ENCODE measurements at regions of chr13 and their contacts with region 1.

Region 1: GRCh38 chr13:111460548-111461444 is 140.4 kb downstream of the TEX29 start:
- DNase-seq: peak in 1 of 2 donors; percentile 26
- ATAC-seq: peak; percentile 53 to 89 (median 74)
- H3K4me3 ChIP-seq: no peak overlapping the region
- H3K27ac ChIP-seq: no peak overlapping the region
- H3K4me1 ChIP-seq: no peaks in the 10 kb centered on the region
- H3K27me3 ChIP-seq: peaks cover 0 to 6% (median 0%) of the 10 kb centered on the region in 3 donors
- CTCF ChIP-seq: peak; percentile 38

Region 2: DNA sequence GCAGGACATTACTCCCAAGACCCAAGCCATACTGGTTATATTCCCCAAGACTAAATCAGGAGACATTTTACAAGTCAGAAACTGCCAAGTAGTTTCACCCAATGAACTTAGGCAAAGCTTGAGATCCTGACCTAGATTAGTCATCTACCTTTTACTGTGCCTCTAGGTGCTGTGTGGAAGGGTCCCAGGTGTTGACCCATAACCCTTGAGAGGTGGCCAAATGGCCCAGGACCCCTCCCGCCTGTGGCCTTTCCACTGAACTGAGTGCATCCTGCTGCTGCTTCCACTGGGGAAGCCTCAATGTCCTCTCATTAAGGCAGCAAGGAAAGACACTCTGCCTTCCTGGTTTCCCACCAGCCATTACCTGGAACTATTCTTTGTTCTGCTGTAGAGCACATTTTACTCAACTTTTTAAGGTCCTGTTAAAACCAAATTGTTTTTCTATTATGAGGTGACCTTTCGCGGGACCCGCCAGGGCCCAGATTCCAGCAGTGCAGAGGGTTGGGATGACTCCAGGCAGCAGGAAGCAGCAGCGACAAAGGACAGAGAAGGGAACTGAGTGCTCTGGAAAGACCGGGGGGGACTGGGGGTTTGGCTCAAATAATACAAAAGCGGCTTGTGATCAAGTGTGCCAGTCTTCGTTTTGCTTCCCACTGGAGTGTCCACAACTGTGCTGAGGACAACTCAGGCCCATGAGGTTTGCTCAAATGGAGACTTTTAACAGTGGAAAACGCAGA is 573.0 kb before region 1 on chr13:
- intact Hi-C with region 1: no loop called
- DNase-seq: no peak
- ATAC-seq: peak; percentile 49 to 63 (median 52)
- H3K4me3 ChIP-seq: no peak overlapping the region
- H3K27ac ChIP-seq: peak overlapping the region; percentile 67
- H3K4me1 ChIP-seq: peaks cover 43% of the 10 kb centered on the region
- H3K27me3 ChIP-seq: no peaks in the 10 kb centered on the region
- CTCF ChIP-seq: no peak

Region 3: GRCh38 chr13:111344471-111345191 is 116.2 kb before region 1 on chr13:
- intact Hi-C with region 1: loop called in 1 of 2 experiments (anchors 10 kb)
- DNase-seq: peak; percentile 54 to 85
- ATAC-seq: peak; percentile 94 to 98 (median 94)
- H3K4me3 ChIP-seq: peak overlapping the region; percentile 12
- H3K27ac ChIP-seq: no peak overlapping the region
- H3K4me1 ChIP-seq: no peaks in the 10 kb centered on the region
- H3K27me3 ChIP-seq: no peaks in the 10 kb centered on the region
- CTCF ChIP-seq: peak; percentile 52

Region 4: DNA sequence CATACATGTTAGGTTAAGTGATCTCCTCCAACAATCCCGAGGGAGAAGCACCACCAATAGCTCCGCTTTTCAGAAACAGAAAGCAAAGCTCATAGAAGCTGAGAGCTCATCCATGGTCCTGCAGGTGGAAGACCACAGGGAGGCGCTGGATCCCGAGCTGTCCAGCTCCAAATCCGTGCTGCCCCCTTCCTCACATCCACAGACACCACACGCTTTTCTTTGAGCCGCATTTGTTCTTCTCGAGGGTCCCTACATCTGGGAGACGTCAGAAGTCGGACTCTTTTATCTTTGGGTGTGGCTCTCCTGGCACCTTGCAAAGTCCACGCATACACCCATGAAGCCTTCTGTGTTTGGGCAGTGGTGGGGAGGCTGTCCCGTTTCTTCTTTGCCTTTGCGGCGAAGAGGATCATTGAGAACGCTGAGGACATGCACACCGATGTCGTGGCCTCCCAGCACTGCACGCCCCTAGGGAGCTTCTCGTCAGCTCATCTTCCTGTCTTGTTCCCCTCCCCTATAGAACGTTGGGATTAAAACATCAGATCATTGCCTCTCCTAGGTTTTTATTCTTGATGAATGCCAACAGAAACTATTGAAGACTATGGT is 44.5 kb after region 1 on chr13:
- intact Hi-C with region 1: no loop called
- DNase-seq: no peak
- ATAC-seq: no peak
- H3K4me3 ChIP-seq: no peak overlapping the region
- H3K27ac ChIP-seq: no peak overlapping the region
- H3K4me1 ChIP-seq: no peaks in the 10 kb centered on the region
- H3K27me3 ChIP-seq: peaks cover 0 to 13% (median 11%) of the 10 kb centered on the region in 3 donors
- CTCF ChIP-seq: peak; percentile 11

Region 5: DNA sequence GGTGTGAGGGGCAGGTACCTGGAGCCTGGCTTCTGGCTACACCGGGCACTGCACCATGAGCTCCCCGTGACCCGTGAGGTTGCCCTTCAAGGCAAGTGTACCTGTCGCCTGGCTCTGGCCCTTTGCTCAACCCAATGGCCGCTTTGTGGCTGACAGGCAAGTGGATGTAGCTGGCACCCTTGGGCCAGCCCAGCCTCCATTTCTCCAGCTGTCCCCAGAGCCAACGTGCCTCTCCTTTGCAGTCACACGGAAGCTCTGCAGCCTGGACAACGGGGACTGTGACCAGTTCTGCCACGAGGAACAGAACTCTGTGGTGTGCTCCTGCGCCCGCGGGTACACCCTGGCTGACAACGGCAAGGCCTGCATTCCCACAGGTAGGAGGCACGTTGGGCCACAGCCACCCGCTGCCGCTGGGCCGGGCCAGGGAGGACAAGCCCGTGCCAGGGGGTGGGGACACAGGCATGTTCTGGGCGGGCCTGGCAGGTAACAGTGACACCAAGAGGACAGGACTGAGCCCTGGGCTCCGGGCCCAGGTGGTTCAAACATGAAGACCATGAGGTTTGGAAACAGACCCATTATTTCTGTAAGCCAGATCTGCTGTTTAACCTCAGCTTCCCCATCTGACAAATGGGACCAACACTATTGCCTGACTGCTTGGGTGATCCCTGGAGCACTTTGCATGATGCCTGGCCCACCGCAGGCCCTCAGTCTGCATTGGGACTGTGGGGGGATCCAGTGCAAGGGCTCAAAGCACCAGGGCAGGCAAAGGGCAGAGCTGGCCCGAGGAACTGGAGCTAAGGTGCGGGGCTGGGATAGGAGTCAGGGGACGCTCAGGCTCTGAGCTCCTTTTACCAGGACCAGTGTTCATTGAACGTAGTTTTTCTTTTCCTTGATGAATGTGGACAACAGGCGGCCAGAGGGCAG is 1680.1 kb after region 1 on chr13:
- intact Hi-C with region 1: loop called in 1 of 2 experiments (anchors 10 kb)
- DNase-seq: peak in 1 of 2 donors; percentile 51
- ATAC-seq: no peak
- H3K4me3 ChIP-seq: no peak overlapping the region
- H3K27ac ChIP-seq: no peak overlapping the region
- H3K4me1 ChIP-seq: no peaks in the 10 kb centered on the region
- H3K27me3 ChIP-seq: no peaks in the 10 kb centered on the region
- CTCF ChIP-seq: no peak

Measured in psoas muscle (tissue), 8 donors.